Calu3 (cell line): ENCODE measurements at regions of chr16 and their contacts with region 1.

Region 1: DNA sequence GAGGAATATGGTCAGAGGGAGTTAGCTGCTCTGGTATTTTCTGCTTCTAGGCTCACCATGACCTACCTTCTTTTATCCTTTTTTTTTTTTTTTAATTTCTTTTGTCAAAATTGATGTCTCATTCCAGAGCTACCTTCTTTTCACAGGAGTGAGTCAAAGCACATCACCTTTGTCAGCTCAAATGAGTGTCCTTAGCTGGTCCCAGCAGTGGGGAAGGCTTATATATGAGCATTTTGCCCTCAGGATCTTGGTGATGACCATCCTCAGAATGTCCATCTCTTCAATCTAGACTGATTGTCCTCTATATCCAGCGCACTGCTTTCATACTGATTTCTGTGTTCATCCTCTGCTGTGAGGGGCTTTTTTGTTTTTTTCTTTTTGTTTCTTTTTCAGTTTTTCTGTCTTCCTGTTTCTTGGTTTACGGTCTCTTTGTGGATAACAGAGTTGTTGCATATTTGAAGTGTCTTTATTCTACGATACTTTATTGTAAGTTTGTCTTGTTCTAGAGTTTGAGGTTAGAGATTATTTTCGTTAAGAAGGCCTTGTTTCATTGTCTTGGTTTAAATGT is 24.9 kb downstream of the CBFB start:
- DNase-seq: no peak
- H3K4me3 Mint-ChIP-seq: no peak overlapping the region
- H3K27ac Mint-ChIP-seq: no peak overlapping the region
- H3K4me1 Mint-ChIP-seq: peaks cover 11% of the 10 kb centered on the region
- H3K27me3 Mint-ChIP-seq: no peaks in the 10 kb centered on the region
- CTCF ChIP-seq: no peak

Region 2: GRCh38 chr16:67068212-67068753 is 14.4 kb after region 1 on chr16:
- CTCF ChIA-PET with region 1: interaction called, 13 read pairs
- intact Hi-C with region 1: no loop called
- DNase-seq: no peak
- H3K4me3 Mint-ChIP-seq: no peak overlapping the region
- H3K27ac Mint-ChIP-seq: no peak overlapping the region
- H3K4me1 Mint-ChIP-seq: peaks cover under 1% of the 10 kb centered on the region
- H3K27me3 Mint-ChIP-seq: no peaks in the 10 kb centered on the region
- CTCF ChIP-seq: no peak